ENCODE measurements at regions of chr1 and their contacts with region 1.

Region 1: DNA sequence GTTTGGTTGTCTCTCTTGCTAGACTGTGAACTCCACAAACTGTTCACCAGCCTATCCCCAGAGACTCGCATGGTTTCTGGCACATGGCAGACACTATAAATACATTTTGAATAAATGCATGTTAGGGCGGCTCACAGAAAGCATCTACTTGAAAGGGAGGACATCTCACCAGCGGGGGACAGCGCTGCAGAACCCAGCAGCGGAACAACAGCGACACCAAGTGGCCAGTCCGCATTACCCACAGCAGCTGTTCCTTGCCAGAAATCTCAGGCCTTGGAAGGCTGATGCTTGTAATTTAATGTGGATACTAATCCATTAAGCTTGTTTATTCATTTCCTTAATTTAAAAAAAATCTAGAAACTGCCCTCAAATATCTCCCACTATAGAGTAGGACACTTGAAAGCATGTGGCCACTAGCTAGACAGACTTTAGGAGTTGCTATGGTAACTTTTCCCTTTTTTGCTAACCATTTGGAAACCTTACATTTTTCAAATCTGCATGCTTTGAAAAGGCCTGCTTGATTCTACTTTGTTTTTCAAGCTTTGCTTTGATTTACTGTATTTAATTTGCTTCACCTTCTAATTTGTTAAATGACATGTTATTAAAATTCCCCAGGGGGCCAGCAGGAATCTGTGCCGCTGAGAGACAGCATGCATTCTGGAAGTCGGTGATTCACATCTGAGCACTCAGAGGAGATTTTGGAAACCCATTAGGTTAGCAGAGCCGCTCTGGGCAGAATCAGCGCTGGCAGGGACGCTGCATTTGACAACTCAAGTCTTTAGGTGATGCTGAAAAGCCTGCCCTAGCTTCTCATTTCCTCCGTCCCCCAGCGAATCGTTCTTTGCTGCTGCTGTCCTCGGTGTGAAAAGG is 63.5 kb upstream of the SSX2IP start:
- DNase-seq: peak in 1 of 2 donors; percentile 70
- H3K4me3 ChIP-seq: no peak overlapping the region
- H3K27ac ChIP-seq: no peak overlapping the region
- H3K4me1 ChIP-seq: peaks cover 0 to 3% of the 10 kb centered on the region in 2 donors
- H3K27me3 ChIP-seq: no peaks in the 10 kb centered on the region
- CTCF ChIP-seq: peak; percentile 85 to 97 (median 89)

Region 2: DNA sequence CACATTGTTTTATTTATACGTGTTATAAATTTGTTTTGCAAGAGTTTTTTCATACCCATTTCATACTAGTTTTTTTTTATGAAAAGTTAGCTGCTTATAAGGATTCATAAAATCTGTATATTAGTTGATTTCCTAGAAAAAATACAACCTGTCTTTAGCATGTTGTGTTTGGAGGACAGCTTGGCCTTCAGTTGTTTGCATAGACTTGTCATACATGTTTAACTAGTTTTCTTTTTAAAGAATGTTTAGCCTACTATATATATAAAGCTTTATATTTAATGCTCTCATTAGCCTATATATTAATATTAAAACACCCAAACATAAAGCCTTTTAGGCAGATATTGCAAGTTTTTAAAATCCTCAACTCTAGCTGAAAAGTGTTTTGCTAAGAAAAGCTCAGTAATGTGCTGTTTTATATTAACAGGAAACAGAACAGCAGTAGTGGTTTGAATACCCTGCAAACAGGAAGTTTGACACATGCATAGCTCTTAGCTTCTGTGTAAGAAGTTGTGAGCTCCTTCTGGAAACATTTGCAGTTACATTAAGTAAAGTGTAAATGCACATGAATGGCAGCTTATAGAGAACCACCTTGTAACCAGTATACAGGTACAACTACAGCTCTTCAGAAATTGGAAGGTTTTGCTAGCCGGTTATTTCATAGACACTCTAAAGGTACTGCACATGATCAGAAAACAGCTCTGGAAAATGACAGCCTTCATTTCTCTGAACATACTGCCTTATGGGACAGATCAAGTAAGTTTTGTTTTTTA is 609.8 kb before region 1 on chr1 and contains the start of gene PRKACB:
- intact Hi-C with region 1: loop called (anchors 10 kb)
- DNase-seq: no peak
- H3K4me3 ChIP-seq: no peak within 1 kb of the TSS
- H3K27ac ChIP-seq: no peak within 1 kb of the TSS
- H3K4me1 ChIP-seq: no peaks in the 10 kb centered on the region
- H3K27me3 ChIP-seq: no peaks in the 10 kb centered on the region
- CTCF ChIP-seq: no peak
- total RNA-seq, gene PRKACB: 23.7 TPM

Region 3: GRCh38 chr1:84433258-84434080 is 320.3 kb before region 1 on chr1:
- intact Hi-C with region 1: loop called (anchors 10 kb)
- DNase-seq: peak in 1 of 2 donors; percentile 69
- H3K4me3 ChIP-seq: peak overlapping the region; percentile 29 to 40
- H3K27ac ChIP-seq: no peak overlapping the region
- H3K4me1 ChIP-seq: no peaks in the 10 kb centered on the region
- H3K27me3 ChIP-seq: no peaks in the 10 kb centered on the region
- CTCF ChIP-seq: peak; percentile 42 to 76 (median 65)

Region 4: DNA sequence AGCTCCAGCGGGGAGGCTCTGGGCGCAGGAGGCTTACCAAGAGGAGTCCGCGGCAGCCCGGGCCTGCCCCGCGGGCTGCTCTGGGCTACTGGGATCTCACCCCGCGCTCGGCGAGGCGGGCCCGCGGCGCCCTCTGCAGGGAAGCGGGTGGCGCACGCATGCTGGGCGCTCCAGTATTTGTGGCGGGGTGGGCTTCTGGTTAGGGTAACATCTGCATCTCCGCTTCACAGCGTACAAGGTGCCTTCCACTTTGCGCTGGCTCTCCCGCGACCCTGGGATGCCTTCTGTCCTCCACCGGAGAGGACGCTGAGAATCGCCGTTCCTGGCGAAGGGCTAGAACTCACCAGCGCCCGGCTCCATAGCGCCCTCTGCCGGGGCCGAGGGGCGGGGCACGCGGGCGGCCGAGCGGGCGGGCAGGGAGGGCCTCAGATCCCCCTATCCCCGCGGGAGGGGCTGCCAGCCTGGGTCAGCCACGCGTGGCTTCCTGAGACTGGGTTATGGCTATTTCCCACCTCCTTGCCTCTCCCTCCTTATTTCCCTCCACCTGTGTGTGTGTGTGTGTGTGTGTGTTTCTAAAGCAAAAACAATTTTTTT is 132.9 kb before region 1 on chr1:
- intact Hi-C with region 1: loop called (anchors 5 kb)
- DNase-seq: peak in 1 of 2 donors; percentile 84
- H3K4me3 ChIP-seq: peak overlapping the region; percentile 72 to 76
- H3K27ac ChIP-seq: peak overlapping the region in 1 of 2 donors; percentile 42
- H3K4me1 ChIP-seq: peaks cover 0 to 13% of the 10 kb centered on the region in 2 donors
- H3K27me3 ChIP-seq: no peaks in the 10 kb centered on the region
- CTCF ChIP-seq: peak; percentile 87 to 96 (median 96)

Region 5: DNA sequence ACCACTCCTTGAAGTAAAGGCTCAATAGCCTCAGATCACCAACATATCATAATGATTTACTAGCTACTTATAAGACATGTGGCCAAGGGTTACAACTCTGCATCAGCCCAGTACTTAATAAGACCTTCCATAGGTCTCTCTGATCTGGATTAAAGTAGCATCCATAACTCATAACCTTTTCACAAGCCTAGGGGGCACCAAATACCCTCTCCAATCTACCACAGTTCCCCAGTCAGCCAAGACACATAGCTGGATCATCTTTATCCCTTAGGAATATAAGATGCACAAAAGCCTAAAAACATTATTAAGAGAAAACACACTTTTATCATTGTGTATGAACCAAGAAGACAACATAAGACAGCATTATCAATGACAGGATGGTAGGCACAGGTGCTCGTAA is 85.6 kb before region 1 on chr1:
- intact Hi-C with region 1: loop called (anchors 1 kb)
- DNase-seq: no peak
- H3K4me3 ChIP-seq: no peak overlapping the region
- H3K27ac ChIP-seq: no peak overlapping the region
- H3K4me1 ChIP-seq: no peaks in the 10 kb centered on the region
- H3K27me3 ChIP-seq: no peaks in the 10 kb centered on the region
- CTCF ChIP-seq: peak; percentile 28 to 48 (median 33)

Measured in ascending aorta (tissue), 2 donors.